ENCODE measurements at regions of chr16 and their contacts with region 1.

Region 1: DNA sequence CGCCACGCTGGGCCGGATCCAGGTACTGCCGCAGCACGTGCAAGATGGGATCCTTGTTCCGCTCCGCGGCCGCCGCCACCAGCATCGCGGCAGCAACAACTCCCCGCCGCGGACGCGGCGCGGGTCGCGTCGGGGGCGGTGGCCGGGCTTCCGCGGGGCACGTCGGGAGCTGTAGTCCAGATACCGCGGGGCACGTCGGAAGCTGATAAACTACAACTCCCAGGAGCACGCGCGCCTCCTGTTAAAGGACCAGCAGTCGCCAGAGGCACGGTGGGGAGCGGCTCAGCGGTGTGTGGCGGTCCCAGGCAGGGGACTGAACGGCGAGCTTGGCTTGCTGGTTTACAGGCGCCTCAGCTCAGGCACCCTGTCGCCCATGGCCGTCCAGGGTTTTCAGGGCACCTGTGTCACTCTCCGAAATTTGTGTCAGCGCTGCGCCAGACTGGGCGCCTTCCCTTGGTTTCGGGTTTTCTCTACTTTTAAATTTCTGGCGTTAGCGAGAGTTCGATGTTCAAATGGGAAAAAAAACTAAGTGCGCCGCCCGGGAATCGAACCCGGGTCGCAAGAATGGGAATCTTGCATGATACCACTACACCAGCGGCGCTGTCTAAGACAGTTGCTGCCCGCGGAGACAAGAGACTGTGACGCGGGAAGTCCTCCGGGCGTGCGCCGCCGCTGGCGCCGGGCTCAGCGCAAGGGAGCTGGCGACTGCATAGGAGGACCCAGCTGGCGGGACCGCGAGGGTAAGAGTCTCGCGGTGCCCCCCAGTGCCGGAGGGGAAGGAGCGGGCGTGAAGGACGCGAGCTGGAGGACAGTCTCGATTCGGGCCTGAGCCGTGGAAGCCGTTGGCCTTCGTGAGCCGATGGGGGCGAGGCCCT is at the start of gene METTL26:
- DNase-seq: peak; percentile 80 to 98
- H3K4me3 ChIP-seq: peak within 1 kb of the TSS; percentile 81 to 97
- H3K27ac ChIP-seq: peak within 1 kb of the TSS; percentile 94 to 99
- H3K4me1 ChIP-seq: peaks cover 6 to 18% of the 10 kb centered on the region in 2 donors
- H3K27me3 ChIP-seq: no peaks in the 10 kb centered on the region
- CTCF ChIP-seq: peak in 1 of 3 experiments; percentile 12
- total RNA-seq, gene METTL26: 523 TPM

Region 2: DNA sequence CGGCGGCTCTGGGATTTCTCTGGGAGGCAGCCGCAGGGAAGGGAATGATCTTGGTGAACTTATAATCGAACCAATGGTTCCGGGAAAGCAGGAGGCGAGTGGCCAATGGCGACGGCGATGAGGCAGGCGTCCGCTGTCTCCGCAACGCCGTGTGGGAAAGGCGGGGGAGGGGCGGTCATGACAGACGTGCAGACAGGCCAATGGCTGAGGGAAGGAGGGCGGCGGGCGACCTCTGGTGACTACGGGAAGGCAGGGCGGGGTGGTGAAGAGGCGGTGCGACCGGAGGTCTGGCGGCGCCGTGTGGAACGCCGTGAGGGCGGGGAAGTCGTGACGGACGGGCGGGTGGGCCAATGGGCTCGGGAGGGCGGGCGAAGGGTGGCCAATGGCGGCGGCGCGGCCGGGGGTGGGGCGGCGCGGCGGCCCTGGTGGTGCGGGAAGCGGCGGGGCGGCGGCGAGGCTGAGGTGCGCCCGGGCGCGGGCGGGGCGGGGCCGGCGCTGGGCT is 46.7 kb before region 1 on chr16 and contains the start of gene RAB40C:
- intact Hi-C with region 1: loop called (anchors 1 kb)
- DNase-seq: peak; percentile 92 to 99
- H3K4me3 ChIP-seq: peak within 1 kb of the TSS; percentile 85 to 92
- H3K27ac ChIP-seq: peak within 1 kb of the TSS; percentile 92 to 94
- H3K4me1 ChIP-seq: peaks cover 8 to 32% of the 10 kb centered on the region in 2 donors
- H3K27me3 ChIP-seq: no peaks in the 10 kb centered on the region
- CTCF ChIP-seq: no peak
- total RNA-seq, gene RAB40C: 29.8 TPM

Region 3: GRCh38 chr16:648781-649589 is 12.5 kb after region 1 on chr16 and contains the start of gene WDR90:
- intact Hi-C with region 1: loop called (anchors 1 kb)
- DNase-seq: peak; percentile 71 to 95
- H3K4me3 ChIP-seq: peak within 1 kb of the TSS; percentile 76 to 91
- H3K27ac ChIP-seq: peak within 1 kb of the TSS; percentile 83 to 87
- H3K4me1 ChIP-seq: peaks cover 9 to 19% of the 10 kb centered on the region in 2 donors
- H3K27me3 ChIP-seq: no peaks in the 10 kb centered on the region
- CTCF ChIP-seq: no peak
- total RNA-seq, gene WDR90: 50.0 TPM

Region 4: DNA sequence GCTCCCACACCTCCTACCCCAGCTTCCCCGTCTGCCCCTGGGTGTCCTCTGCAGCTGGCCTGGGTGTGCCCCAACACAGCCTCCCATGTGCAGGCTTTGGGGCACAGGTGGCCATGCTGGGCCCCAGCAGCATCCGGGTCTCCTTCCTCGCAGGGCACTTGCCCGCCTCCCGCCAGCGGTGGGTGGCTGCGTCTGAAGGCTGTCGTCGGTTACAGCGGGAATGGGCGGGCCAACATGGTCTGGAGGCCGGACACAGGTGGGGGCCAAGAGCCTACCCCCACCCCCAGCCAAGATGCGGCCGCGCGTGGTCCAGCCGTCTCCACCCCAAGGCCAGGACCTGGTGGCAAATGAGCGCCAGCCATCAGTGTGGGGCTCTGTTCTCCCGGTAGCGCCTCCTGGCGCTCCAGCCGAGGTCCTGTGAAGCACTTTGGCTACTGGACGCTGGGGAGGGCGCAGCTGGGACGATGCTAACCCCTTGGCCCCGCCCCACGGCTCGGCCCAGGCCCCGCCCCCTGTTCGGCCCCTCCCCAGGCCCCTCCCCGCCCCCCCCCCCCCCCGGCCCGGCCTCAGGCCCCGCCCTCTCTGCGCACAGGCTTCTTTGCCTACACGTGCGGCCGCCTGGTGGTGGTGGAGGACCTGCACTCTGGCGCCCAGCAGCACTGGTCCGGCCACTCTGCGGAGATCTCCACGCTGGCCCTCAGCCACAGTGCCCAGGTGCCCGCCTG is 24.2 kb after region 1 on chr16:
- intact Hi-C with region 1: loop called (anchors 2 kb)
- DNase-seq: peak in 1 of 2 donors; percentile 91
- H3K4me3 ChIP-seq: peak overlapping the region; percentile 15 to 46
- H3K27ac ChIP-seq: peak overlapping the region; percentile 59 to 78
- H3K4me1 ChIP-seq: peaks cover 0 to 5% of the 10 kb centered on the region in 2 donors
- H3K27me3 ChIP-seq: no peaks in the 10 kb centered on the region
- CTCF ChIP-seq: peak; percentile 37 to 59 (median 38)

Region 5: GRCh38 chr16:679814-680622 is 43.6 kb after region 1 on chr16 and contains the start of gene STUB1:
- intact Hi-C with region 1: loop called (anchors 2 kb)
- DNase-seq: peak in 1 of 2 donors; percentile 90
- H3K4me3 ChIP-seq: peak within 1 kb of the TSS; percentile 89 to 90
- H3K27ac ChIP-seq: peak within 1 kb of the TSS; percentile 85 to 90
- H3K4me1 ChIP-seq: peaks cover 20 to 38% of the 10 kb centered on the region in 2 donors
- H3K27me3 ChIP-seq: no peaks in the 10 kb centered on the region
- CTCF ChIP-seq: peak in 1 of 3 experiments; percentile 10
- total RNA-seq, gene STUB1: 258 TPM

Measured in ascending aorta (tissue), 2 donors.